ENCODE measurements at regions of chr17 and their contacts with region 1.

Region 1: GRCh38 chr17:49952209-49952911 is 16.6 kb upstream of the DLX4 start:
- DNase-seq: peak; percentile 69 to 78 (median 75)
- H3K4me3 ChIP-seq: no peak overlapping the region
- H3K4me3 Mint-ChIP-seq: no peak overlapping the region
- H3K27ac ChIP-seq: no peak overlapping the region
- H3K27ac Mint-ChIP-seq: no peak overlapping the region
- H3K4me1 ChIP-seq: no peaks in the 10 kb centered on the region
- H3K4me1 Mint-ChIP-seq: peaks cover 0 to 3% (median 0%) of the 10 kb centered on the region in 4 donors
- H3K27me3 ChIP-seq: peaks cover 9% of the 10 kb centered on the region
- H3K27me3 Mint-ChIP-seq: peaks cover 21 to 52% of the 10 kb centered on the region in 2 donors

Region 2: DNA sequence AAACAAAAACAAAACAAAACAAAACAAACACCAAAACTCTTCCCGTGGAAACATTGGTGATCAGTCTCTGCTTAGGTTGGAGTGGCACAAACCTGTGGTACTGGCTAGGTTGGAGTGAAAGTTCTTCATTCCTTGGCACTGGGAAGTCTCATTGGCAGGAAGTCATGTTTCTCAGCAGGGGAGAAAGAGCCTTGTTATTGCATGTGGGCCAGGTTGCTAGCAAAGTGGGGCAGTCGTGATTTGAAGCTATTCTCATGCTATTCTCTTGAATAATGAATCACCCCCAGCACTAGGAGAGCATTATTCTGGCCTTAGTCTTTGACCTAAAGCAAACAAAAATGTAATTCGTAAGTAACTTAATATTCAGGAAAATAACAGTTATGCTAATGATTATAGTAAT is 844.0 kb before region 1 on chr17:
- CTCF ChIA-PET with region 1: no interaction called
- POLR2A ChIA-PET with region 1: no interaction called
- intact Hi-C with region 1: no loop called
- DNase-seq: no peak
- H3K4me3 ChIP-seq: no peak overlapping the region
- H3K4me3 Mint-ChIP-seq: peak overlapping the region in 1 of 8 donors; percentile 30
- H3K27ac ChIP-seq: no peak overlapping the region
- H3K27ac Mint-ChIP-seq: no peak overlapping the region
- H3K4me1 ChIP-seq: no peaks in the 10 kb centered on the region
- H3K4me1 Mint-ChIP-seq: peaks cover 0 to 3% (median 2%) of the 10 kb centered on the region in 4 donors
- H3K27me3 ChIP-seq: no peaks in the 10 kb centered on the region
- H3K27me3 Mint-ChIP-seq: peaks cover 6 to 8% of the 10 kb centered on the region in 2 donors

Region 3: GRCh38 chr17:49861150-49861892 is 91.0 kb before region 1 on chr17:
- CTCF ChIA-PET with region 1: interaction called, 3 read pairs
- POLR2A ChIA-PET with region 1: no interaction called
- intact Hi-C with region 1: loop called (anchors 2 kb)
- DNase-seq: peak in 4 of 5 donors; percentile 39 to 48 (median 44)
- H3K4me3 ChIP-seq: no peak overlapping the region
- H3K4me3 Mint-ChIP-seq: no peak overlapping the region
- H3K27ac ChIP-seq: no peak overlapping the region
- H3K27ac Mint-ChIP-seq: no peak overlapping the region
- H3K4me1 ChIP-seq: no peaks in the 10 kb centered on the region
- H3K4me1 Mint-ChIP-seq: peaks cover 0 to 3% (median 1%) of the 10 kb centered on the region in 4 donors
- H3K27me3 ChIP-seq: no peaks in the 10 kb centered on the region
- H3K27me3 Mint-ChIP-seq: peaks cover 3 to 7% of the 10 kb centered on the region in 2 donors

Region 4: GRCh38 chr17:49880291-49881053 is 71.9 kb before region 1 on chr17:
- CTCF ChIA-PET with region 1: interaction called, 3 read pairs
- POLR2A ChIA-PET with region 1: no interaction called
- intact Hi-C with region 1: loop called (anchors 5 kb)
- DNase-seq: peak; percentile 56 to 70 (median 64)
- H3K4me3 ChIP-seq: no peak overlapping the region
- H3K4me3 Mint-ChIP-seq: peak overlapping the region in 4 of 8 donors; percentile 22 to 52 (median 42)
- H3K27ac ChIP-seq: no peak overlapping the region
- H3K27ac Mint-ChIP-seq: no peak overlapping the region
- H3K4me1 ChIP-seq: peaks cover 10% of the 10 kb centered on the region
- H3K4me1 Mint-ChIP-seq: peaks cover 0 to 7% (median 1%) of the 10 kb centered on the region in 4 donors
- H3K27me3 ChIP-seq: peaks cover 18% of the 10 kb centered on the region
- H3K27me3 Mint-ChIP-seq: peaks cover 25 to 40% of the 10 kb centered on the region in 2 donors

Region 5: GRCh38 chr17:49968380-49969133 is 16.2 kb after region 1 on chr17:
- CTCF ChIA-PET with region 1: interaction called, 23 read pairs
- POLR2A ChIA-PET with region 1: interaction called, 3 read pairs
- intact Hi-C with region 1: no loop called
- DNase-seq: peak; percentile 68 to 72 (median 69)
- H3K4me3 ChIP-seq: peak overlapping the region; percentile 22 to 67
- H3K4me3 Mint-ChIP-seq: peak overlapping the region; percentile 86 to 95 (median 90)
- H3K27ac ChIP-seq: no peak overlapping the region
- H3K27ac Mint-ChIP-seq: peak overlapping the region in 5 of 7 donors; percentile 55 to 75 (median 72)
- H3K4me1 ChIP-seq: peaks cover 59% of the 10 kb centered on the region
- H3K4me1 Mint-ChIP-seq: peaks cover 28 to 70% (median 49%) of the 10 kb centered on the region in 4 donors
- H3K27me3 ChIP-seq: peaks cover 72% of the 10 kb centered on the region
- H3K27me3 Mint-ChIP-seq: peaks cover 62 to 70% of the 10 kb centered on the region in 2 donors

Region 6: DNA sequence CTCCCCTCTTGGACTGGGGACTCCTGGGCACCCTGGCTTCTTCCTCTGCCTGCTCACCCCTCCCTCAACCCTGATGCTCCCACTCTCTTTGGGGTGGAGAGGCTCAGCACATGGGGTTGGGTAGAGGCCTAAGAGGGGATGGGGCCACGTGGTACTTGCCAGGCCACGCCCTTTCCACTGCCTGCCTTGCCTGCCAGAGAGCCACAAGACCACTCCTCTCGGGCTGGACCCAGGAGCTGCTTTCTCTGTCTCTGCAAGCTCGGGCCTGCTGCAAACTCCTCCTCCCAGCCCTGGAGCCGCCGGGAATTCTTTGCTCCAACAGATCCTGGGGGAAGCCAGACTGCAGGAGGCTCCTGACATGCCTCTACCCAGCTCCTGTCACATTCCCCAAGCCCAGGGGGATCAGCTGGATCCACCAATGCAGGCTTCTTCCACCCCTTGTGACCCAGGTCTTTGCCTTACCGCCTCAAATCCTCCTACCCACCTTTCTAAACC is 28.4 kb after region 1 on chr17:
- CTCF ChIA-PET with region 1: interaction called, 14 read pairs
- POLR2A ChIA-PET with region 1: interaction called, 3 read pairs
- intact Hi-C with region 1: no loop called
- DNase-seq: no peak
- H3K4me3 ChIP-seq: no peak overlapping the region
- H3K4me3 Mint-ChIP-seq: no peak overlapping the region
- H3K27ac ChIP-seq: no peak overlapping the region
- H3K27ac Mint-ChIP-seq: no peak overlapping the region
- H3K4me1 ChIP-seq: no peaks in the 10 kb centered on the region
- H3K4me1 Mint-ChIP-seq: no peaks in the 10 kb centered on the region
- H3K27me3 ChIP-seq: no peaks in the 10 kb centered on the region
- H3K27me3 Mint-ChIP-seq: peaks cover 21 to 39% of the 10 kb centered on the region in 2 donors